ENCODE measurements at regions of chr2 and their contacts with region 1.

Region 1: DNA sequence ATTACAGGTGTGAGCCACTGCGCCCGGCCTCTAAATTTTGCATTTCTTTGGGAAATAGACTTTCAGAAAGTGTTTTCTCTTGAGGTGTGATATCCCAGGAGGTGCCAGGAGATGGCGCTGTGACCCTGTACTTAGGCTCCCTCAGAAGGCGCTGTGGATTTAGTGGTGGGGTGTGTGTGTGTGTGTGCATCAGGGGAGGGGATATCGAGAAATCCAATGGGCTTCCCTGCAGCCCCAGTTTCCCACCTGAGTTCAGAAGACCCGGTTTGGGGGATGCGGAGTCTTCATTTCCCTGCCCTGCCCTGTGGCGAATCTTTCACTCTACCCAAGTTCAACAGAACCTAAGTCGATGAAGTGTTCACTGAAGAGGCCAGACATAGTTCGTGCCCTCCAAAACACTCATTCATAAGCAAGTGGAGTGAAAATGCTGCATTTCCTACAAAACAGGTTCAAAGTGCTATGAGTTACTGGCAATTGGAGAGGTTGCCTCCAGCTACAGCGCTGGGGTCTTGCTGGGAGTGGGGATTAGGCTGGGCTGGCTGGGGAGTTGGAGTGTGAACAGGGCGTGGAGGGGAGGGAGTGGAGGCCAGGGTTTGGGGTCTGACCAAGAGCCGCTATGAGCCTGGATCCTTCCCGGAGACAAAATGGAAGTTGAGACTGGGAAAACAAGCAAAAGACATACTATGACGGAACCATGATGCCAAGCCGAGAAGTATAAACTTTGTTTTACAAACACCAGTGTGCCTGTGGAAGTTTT is 6.5 kb upstream of the WNT6 start:
- DNase-seq: peak; percentile 55
- H3K4me3 ChIP-seq: no peak overlapping the region
- H3K27ac ChIP-seq: no peak overlapping the region
- H3K4me1 ChIP-seq: no peaks in the 10 kb centered on the region
- H3K27me3 ChIP-seq: peaks cover 46 to 48% of the 10 kb centered on the region in 2 experiments
- CTCF ChIP-seq: peak; percentile 66 to 82
- POLR2A ChIP-seq: no peak

Region 2: DNA sequence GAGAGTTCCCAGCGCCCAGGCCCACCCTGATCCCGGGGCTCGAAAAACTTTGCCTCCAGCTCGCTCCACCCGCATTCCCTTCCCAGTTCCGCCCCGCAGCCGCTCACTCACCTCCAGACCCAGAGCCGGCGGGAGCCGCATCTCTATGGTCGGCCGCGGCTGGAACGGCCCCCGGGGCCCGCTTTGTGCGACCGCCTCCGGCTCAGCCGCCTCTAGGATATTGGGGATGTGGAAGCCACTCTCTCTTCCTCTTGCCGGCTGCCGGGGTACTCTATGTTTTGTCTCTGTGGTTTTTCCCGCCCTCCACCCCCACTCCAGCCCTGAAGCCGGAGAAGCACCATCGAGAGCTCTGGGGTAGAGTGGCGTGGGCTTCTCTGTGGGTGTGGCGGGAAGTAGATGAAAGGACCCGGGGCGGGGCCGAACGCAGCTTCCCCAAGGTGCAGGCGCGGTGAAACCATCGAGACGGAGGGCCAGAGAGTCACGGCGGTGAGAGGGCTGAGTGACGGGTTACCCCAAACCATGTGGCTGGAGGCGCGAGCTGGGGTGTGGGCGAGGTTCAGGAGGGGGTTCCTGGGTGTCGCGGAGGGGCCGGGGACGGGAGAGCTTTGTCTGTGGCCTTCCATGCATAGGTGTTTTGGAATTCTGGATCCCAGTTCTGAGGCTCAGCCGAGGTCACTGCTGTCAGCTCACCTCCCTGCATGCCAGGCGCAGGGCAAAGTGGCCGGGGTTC is 193.7 kb before region 1 on chr2 and contains the starts of genes BCS1L and ZNF142:
- CTCF ChIA-PET with region 1: interaction called, 99 read pairs
- POLR2A ChIA-PET with region 1: no interaction called
- dilution Hi-C with region 1: no loop called
- intact Hi-C with region 1: no loop called
- DNase-seq: peak; percentile 88
- H3K4me3 ChIP-seq: peak within 1 kb of the TSS; percentile 74 to 95 (median 87)
- H3K27ac ChIP-seq: peak within 1 kb of the TSS; percentile 24
- H3K4me1 ChIP-seq: peaks cover 9% of the 10 kb centered on the region
- H3K27me3 ChIP-seq: no peaks in the 10 kb centered on the region
- CTCF ChIP-seq: no peak
- POLR2A ChIP-seq: peak; percentile 73
- total RNA-seq, gene BCS1L: 43.0 and 57.4 TPM in 2 replicates
- total RNA-seq, gene ZNF142: 31.4 and 34.5 TPM in 2 replicates

Region 3: GRCh38 chr2:218691234-218691633 is 161.9 kb before region 1 on chr2:
- CTCF ChIA-PET with region 1: interaction called, 120 read pairs
- POLR2A ChIA-PET with region 1: no interaction called
- dilution Hi-C with region 1: no loop called
- intact Hi-C with region 1: no loop called
- DNase-seq: no peak
- H3K4me3 ChIP-seq: no peak overlapping the region
- H3K27ac ChIP-seq: no peak overlapping the region
- H3K4me1 ChIP-seq: no peaks in the 10 kb centered on the region
- H3K27me3 ChIP-seq: no peaks in the 10 kb centered on the region
- CTCF ChIP-seq: no peak
- POLR2A ChIP-seq: no peak

Region 4: DNA sequence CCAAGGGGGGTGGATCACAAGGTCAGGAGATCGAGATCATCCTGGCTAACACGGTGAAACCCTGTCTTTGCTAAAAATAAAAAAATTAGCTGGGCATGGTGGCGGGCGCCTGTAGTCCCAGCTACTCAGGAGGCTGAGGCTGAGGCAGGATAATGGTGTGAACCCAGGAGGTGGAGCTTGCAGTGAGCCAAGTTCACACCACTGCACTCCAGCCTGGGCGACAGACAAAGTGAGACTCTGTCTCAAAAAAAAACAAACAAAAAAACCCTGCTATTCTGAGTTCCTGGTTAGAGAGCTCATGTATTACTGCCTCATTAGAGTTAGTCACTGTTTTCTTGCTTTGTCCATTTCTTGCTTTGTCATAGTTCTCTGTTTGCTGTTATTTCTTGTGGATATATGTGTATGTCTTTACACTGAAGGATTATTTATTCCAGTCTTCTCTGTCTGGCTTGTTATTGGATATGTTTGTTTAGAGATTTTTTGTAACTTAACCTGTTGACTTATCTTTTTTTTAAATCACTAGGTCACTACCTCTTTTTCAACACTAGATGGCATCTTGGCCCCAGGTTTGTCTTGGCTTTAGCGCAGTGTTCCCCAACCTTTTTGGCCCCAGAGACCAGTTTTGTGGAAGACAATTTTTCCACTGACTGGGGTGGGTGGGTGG is 125.5 kb before region 1 on chr2:
- CTCF ChIA-PET with region 1: interaction called, 131 read pairs
- POLR2A ChIA-PET with region 1: no interaction called
- dilution Hi-C with region 1: no loop called
- intact Hi-C with region 1: no loop called
- DNase-seq: peak; percentile 18
- H3K4me3 ChIP-seq: no peak overlapping the region
- H3K27ac ChIP-seq: no peak overlapping the region
- H3K4me1 ChIP-seq: peaks cover 15% of the 10 kb centered on the region
- H3K27me3 ChIP-seq: no peaks in the 10 kb centered on the region
- CTCF ChIP-seq: peak; percentile 13 to 24
- POLR2A ChIP-seq: no peak

Region 5: DNA sequence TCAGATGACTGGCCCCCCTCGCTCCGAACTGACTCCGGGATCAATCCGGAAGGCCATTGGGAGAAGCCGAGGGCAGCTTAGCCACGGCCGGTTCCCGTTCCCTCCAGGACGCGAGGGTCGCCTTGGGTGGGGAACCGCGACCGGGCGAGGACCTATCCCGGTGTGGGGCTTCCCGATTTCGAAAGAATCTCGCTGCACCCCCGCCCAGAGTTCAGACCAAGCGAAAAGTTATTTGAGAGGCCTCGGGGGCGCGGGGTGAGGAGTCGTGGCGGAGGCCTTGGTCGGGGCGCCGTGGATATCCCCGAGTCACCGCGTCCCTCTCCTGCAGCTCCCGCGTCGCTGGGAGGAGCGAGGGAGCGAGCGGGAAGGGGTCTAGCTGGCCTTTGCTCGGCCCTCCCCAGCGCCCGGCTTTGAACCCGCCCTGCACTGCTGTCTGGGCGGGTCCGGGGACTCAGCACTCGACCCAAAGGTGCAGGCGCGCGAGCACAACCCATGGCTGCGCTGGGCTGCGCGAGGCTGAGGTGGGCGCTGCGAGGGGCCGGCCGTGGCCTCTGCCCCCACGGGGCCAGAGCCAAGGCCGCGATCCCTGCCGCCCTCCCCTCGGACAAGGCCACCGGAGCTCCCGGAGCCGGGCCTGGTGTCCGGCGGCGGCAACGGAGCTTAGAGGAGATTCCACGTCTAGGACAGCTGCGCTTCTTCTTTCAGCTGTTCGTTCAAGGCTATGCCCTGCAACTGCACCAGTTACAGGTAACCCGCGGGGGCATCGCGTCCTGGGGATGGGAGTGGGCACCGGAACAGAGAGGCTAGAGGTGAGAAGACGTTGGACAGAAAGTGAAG is 71.2 kb before region 1 on chr2 and contains the start of gene CYP27A1:
- CTCF ChIA-PET with region 1: interaction called, 38 read pairs
- POLR2A ChIA-PET with region 1: no interaction called
- dilution Hi-C with region 1: no loop called
- intact Hi-C with region 1: no loop called
- DNase-seq: peak; percentile 43
- H3K4me3 ChIP-seq: peak within 1 kb of the TSS; percentile 44 to 66 (median 53)
- H3K27ac ChIP-seq: no peak within 1 kb of the TSS
- H3K4me1 ChIP-seq: peaks cover 6% of the 10 kb centered on the region
- H3K27me3 ChIP-seq: no peaks in the 10 kb centered on the region
- CTCF ChIP-seq: no peak
- POLR2A ChIP-seq: no peak
- total RNA-seq, gene CYP27A1: 12.6 and 15.1 TPM in 2 replicates

Region 6: GRCh38 chr2:218839430-218839829 is 13.7 kb before region 1 on chr2:
- CTCF ChIA-PET with region 1: interaction called, 44 read pairs
- POLR2A ChIA-PET with region 1: no interaction called
- dilution Hi-C with region 1: no loop called
- intact Hi-C with region 1: no loop called
- DNase-seq: no peak
- H3K4me3 ChIP-seq: no peak overlapping the region
- H3K27ac ChIP-seq: no peak overlapping the region
- H3K4me1 ChIP-seq: no peaks in the 10 kb centered on the region
- H3K27me3 ChIP-seq: peaks cover 2 to 5% of the 10 kb centered on the region in 2 experiments
- CTCF ChIP-seq: no peak
- POLR2A ChIP-seq: no peak

Region 7: DNA sequence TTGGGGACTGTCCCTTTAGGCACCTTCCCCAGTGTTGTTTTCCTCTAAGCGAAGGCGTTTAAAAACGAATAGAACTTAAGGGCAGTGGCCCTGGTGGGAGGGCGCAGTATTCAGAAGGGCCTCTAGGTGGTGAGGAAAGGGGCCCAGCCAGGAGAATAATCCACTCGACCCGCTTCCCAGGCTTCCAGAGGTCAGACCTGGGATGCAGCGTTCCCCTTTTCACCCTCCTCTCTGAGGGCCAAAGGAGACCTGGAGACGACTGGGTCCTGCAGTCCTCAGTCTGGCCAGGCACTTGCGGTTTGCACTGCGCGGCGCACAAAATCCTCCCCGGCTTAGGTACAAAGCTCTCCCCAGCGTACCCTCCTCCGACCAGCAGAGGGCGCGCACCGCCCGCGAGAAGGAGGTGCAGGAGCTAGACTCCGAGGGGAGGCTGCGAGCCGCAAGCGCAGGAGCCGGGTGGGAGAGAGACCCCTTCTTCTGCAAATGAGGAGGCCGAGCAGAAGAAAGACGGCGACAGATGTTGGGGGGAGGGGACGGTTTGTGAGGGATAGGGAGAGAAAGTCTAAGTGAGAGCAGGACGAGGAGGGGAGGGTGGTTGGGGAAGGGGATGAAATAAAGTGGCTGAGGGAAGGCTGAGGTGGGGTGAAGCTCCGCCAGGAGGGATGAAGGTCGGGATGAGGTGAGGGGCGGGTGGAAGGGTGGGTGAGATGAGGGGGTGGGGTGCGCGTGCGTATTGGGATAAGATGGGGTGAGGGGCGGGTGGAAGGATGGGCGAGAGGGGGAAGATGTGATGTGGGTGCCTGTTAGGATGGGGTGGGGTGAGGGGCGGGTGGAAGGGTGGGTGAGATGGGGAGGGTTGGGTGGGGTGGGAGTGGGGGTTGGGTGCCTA is 127.0 kb after region 1 on chr2:
- CTCF ChIA-PET with region 1: interaction called, 5 read pairs
- POLR2A ChIA-PET with region 1: no interaction called
- dilution Hi-C with region 1: no loop called
- intact Hi-C with region 1: loop called (anchors 5 kb)
- DNase-seq: peak; percentile 81
- H3K4me3 ChIP-seq: no peak overlapping the region
- H3K27ac ChIP-seq: no peak overlapping the region
- H3K4me1 ChIP-seq: peaks cover 15% of the 10 kb centered on the region
- H3K27me3 ChIP-seq: peaks cover 41 to 53% of the 10 kb centered on the region in 2 experiments
- CTCF ChIP-seq: peak; percentile 91 to 98
- POLR2A ChIP-seq: no peak

Region 8: DNA sequence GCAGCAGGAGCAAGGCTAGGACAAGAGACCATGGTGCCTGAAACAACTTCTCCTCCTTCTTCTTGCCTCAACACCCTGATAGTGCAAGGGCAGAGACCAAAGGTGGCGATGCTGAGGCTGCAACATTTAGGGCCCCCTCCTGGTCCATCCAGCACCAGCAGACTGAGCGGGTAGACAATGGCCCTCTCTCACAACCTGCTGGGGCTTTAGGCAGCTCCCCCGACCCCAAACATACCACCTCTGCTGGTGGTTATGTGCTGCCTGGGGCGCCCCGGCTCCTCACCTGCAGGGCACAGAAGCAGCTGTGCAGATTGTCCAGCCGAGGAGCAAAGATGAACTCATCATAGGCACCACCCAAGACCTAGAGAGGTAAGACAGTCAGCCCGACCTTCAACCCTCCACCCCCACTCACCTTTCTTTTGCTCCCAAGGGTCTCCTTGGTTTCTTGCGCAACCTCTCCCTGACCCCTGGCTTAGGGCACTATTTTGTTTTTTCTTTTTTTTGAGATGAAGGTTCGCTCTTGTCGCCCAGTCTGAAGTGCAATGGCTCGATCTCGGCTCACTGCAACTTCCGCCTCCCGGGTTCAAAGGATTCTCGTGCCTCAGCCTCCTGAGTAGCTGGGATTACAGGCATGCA is 531.1 kb after region 1 on chr2:
- CTCF ChIA-PET with region 1: no interaction called
- POLR2A ChIA-PET with region 1: no interaction called
- dilution Hi-C with region 1: no loop called
- intact Hi-C with region 1: no loop called
- DNase-seq: no peak
- H3K4me3 ChIP-seq: no peak overlapping the region
- H3K27ac ChIP-seq: no peak overlapping the region
- H3K4me1 ChIP-seq: peaks cover 9% of the 10 kb centered on the region
- H3K27me3 ChIP-seq: no peaks in the 10 kb centered on the region
- CTCF ChIP-seq: no peak
- POLR2A ChIP-seq: no peak